Left lung (tissue), 14 donors: ENCODE measurements at regions of chr19 and their contacts with region 1.

Region 1: GRCh38 chr19:17346109-17346671 is 8.8 kb downstream of the GTPBP3 start:
- DNase-seq: peak in 3 of 4 donors; percentile 73 to 94 (median 75)
- ATAC-seq: peak; percentile 95
- H3K4me3 ChIP-seq: no peak overlapping the region
- H3K27ac ChIP-seq: no peak overlapping the region
- H3K4me1 ChIP-seq: peaks cover 0 to 40% of the 10 kb centered on the region in 2 donors
- H3K27me3 ChIP-seq: peaks cover 0 to 30% of the 10 kb centered on the region in 2 donors
- CTCF ChIP-seq: peak; percentile 96 to 99

Region 2: GRCh38 chr19:16969127-16969526 is 377.1 kb before region 1 on chr19:
- intact Hi-C with region 1: no loop called
- DNase-seq: no peak
- ATAC-seq: peak; percentile 37
- H3K4me3 ChIP-seq: no peak overlapping the region
- H3K27ac ChIP-seq: no peak overlapping the region
- H3K4me1 ChIP-seq: no peaks in the 10 kb centered on the region
- H3K27me3 ChIP-seq: no peaks in the 10 kb centered on the region
- CTCF ChIP-seq: no peak

Region 3: GRCh38 chr19:17385878-17386611 is 39.9 kb after region 1 on chr19:
- intact Hi-C with region 1: loop called in 1 of 2 experiments (anchors 2 kb)
- DNase-seq: peak in 3 of 4 donors; percentile 58 to 90 (median 66)
- ATAC-seq: peak; percentile 68
- H3K4me3 ChIP-seq: no peak overlapping the region
- H3K27ac ChIP-seq: no peak overlapping the region
- H3K4me1 ChIP-seq: peaks cover 0 to 34% of the 10 kb centered on the region in 2 donors
- H3K27me3 ChIP-seq: peaks cover 0 to 16% of the 10 kb centered on the region in 2 donors
- CTCF ChIP-seq: peak; percentile 81 to 93

Region 4: DNA sequence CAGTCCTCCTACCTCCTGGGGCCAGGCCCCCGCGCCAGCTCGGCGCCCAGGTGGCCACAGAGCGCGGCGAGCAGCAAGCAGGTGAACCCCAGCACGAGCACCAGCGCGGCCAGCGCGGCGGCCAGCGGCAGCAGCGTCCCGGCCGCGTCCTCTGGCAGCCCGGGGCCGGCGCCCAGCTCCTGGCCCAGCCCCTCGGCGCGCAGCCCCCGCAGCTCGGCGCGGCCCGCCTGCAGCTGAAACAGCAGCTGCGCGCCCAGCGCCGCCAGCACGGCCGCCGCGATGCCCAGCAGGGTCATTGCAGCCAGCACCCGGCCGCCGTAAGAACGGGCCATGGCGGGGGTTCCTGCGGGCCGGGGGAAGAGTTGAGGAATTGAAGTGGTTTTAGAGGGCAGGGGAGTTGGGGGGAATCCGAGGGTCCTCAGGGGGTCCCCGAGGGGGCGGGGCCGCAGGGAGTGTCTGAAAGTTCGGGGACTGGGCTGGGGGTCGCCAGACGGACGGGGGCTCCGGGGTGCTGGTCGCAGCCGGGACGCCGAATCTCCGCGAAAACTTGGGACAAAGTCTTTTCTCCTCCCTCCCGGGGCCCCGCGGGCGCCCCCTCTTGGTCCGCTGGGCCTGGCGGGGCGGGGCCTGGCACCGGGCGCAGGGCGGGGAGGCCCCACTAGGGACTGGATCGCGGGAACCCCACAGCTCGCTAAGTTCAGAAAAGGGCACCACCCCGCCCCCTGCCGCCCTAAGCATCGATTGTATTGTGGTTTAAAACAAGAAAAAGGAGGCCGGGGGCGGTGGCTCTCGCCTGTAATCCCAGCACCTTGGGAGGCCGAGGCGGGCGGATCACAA is 102.2 kb after region 1 on chr19 and contains the start of gene TMEM221:
- intact Hi-C with region 1: no loop called
- DNase-seq: peak in 2 of 4 donors; percentile 45 to 81
- ATAC-seq: peak; percentile 76
- H3K4me3 ChIP-seq: peak within 1 kb of the TSS; percentile 17 to 25
- H3K27ac ChIP-seq: no peak within 1 kb of the TSS
- H3K4me1 ChIP-seq: peaks cover 0 to 12% of the 10 kb centered on the region in 2 donors
- H3K27me3 ChIP-seq: peaks cover 0 to 42% of the 10 kb centered on the region in 2 donors
- CTCF ChIP-seq: peak; percentile 32 to 36
- polyA plus RNA-seq, gene TMEM221: 1.6 to 2.6 (median 2.0) TPM